ENCODE measurements at regions of chr14 and their contacts with region 1.

Region 1: DNA sequence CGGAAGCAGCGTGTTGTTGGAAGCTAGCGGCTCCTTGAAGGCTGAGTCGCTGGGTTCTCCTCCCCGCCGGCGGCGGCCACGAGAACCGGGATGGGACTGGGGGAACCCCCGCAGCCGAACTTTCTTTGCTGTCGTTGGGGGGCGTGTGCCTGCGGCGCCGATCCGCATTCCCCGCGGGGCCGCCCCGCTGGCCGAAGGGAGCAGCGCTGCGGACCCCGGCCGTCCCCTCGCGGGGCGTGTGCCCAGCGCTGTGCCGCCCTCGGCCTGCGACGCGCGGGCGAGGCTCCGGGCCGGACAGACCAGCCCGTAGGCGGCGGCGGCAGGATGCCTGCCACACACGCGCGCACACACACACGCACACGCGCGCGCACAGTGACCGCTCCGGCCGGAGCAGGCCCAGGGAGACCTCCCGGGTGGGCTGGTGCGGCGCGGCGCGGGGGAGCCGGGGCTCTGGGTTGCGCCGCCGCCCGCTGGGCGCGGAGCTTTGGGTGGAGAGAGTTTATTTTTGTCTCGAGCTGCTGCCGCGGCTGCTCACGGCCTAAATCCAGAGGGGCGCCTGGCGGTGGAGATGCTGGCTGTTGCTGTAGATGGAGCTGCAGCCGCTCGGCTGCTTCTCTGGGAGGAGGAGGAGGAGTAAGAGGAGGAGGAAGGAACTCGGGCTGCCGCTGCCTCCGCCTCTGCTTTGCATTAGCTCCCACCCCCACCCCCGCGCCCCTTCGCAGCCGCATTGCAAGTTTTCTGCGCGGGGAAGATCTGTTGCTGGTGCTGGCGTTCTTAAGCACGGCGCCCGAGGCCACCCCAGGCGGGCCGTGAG is at the start of gene SAMD4A:
- DNase-seq: peak; percentile 78
- H3K4me3 ChIP-seq: peak within 1 kb of the TSS; percentile 65 to 78 (median 77)
- H3K27ac ChIP-seq: peak within 1 kb of the TSS; percentile 98 to 100 (median 99)
- H3K4me1 ChIP-seq: peaks cover 7 to 15% of the 10 kb centered on the region in 2 donors
- H3K27me3 ChIP-seq: no peaks in the 10 kb centered on the region
- CTCF ChIP-seq: peak in 4 of 6 experiments; percentile 28 to 43 (median 36)
- POLR2A ChIP-seq: peak in 1 of 2 donors; percentile 67
- total RNA-seq, gene SAMD4A: 12.6 to 32.7 (median 17.6) TPM

Region 2: DNA sequence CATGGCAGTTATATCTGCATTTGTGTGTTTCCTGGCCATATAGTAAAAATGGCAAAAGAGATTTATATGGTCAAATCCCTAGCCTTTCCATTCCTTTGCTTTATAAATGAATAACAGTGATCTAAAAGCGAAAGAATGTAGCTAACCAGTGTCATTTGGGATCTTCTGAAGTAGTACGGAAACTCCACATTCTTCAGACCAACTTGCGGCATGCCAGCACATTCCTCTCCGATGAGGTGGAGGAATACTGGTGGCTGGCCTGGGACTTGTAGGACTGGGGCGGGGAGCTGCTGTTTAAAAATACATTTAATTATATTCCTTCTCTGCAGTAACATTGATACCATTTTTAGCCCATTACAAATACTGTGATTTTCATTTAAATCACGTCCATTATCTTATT is 85.6 kb after region 1 on chr14:
- intact Hi-C with region 1: no loop called
- DNase-seq: peak; percentile 92 to 94
- H3K4me3 ChIP-seq: no peak overlapping the region
- H3K27ac ChIP-seq: peak overlapping the region; percentile 84 to 98 (median 89)
- H3K4me1 ChIP-seq: peaks cover 34 to 47% of the 10 kb centered on the region in 2 donors
- H3K27me3 ChIP-seq: no peaks in the 10 kb centered on the region
- CTCF ChIP-seq: no peak
- POLR2A ChIP-seq: peak in 1 of 2 donors; percentile 65

Region 3: DNA sequence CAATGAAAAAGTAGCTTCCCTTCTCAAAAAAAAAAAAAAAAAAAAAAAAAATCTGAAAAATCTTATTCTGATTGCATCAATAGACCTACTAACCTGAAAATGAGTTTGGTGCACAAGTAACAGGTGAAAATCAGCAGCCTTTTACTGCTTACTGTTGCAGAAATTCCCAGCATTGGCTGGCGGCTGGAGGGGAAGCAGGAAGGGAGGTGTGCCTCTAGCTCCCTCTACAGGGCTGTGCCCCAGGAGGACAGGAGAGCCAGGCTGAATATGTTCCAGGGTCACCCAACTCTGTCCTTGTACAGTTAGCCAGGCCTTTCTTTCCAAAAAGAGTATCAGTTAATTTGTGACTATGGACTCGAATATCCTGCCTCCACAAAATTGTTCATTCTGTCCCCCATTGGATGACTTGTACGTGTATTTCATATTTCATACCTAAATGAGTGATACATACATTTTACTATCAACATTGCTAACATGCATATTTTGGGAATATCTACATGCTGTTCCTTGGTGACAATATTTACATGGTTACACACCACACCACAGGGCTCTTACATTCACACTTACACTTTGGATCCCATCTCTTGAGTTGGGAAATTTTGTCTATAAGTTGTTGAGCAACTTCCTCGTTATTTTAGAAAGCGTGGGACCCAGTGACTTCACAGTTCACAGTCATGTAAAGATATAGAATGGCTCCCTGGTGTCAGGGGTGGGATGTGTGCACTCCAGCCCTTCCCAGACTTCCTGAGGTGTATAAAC is 125.1 kb after region 1 on chr14:
- intact Hi-C with region 1: loop called (anchors 5 kb)
- DNase-seq: peak; percentile 82 to 87
- H3K4me3 ChIP-seq: no peak overlapping the region
- H3K27ac ChIP-seq: no peak overlapping the region
- H3K4me1 ChIP-seq: peaks cover 3 to 17% of the 10 kb centered on the region in 2 donors
- H3K27me3 ChIP-seq: no peaks in the 10 kb centered on the region
- CTCF ChIP-seq: peak; percentile 62 to 90 (median 84)
- POLR2A ChIP-seq: no peak

Region 4: GRCh38 chr14:54709444-54709843 is 142.8 kb after region 1 on chr14:
- intact Hi-C with region 1: no loop called
- DNase-seq: peak; percentile 21 to 30
- H3K4me3 ChIP-seq: no peak overlapping the region
- H3K27ac ChIP-seq: peak overlapping the region; percentile 39 to 81 (median 66)
- H3K4me1 ChIP-seq: peaks cover 26 to 53% of the 10 kb centered on the region in 2 donors
- H3K27me3 ChIP-seq: no peaks in the 10 kb centered on the region
- CTCF ChIP-seq: no peak
- POLR2A ChIP-seq: peak in 1 of 2 donors; percentile 31

Region 5: GRCh38 chr14:54805521-54806322 is 239.1 kb after region 1 on chr14:
- intact Hi-C with region 1: loop called (anchors 5 kb)
- DNase-seq: peak; percentile 82 to 88
- H3K4me3 ChIP-seq: no peak overlapping the region
- H3K27ac ChIP-seq: no peak overlapping the region
- H3K4me1 ChIP-seq: peaks cover 0 to 6% of the 10 kb centered on the region in 2 donors
- H3K27me3 ChIP-seq: no peaks in the 10 kb centered on the region
- CTCF ChIP-seq: peak; percentile 78 to 94 (median 86)
- POLR2A ChIP-seq: no peak

Measured in thyroid gland (tissue), 4 donors.